A549 (cell line): ENCODE measurements at regions of chr12 and their contacts with region 1.

Region 1: DNA sequence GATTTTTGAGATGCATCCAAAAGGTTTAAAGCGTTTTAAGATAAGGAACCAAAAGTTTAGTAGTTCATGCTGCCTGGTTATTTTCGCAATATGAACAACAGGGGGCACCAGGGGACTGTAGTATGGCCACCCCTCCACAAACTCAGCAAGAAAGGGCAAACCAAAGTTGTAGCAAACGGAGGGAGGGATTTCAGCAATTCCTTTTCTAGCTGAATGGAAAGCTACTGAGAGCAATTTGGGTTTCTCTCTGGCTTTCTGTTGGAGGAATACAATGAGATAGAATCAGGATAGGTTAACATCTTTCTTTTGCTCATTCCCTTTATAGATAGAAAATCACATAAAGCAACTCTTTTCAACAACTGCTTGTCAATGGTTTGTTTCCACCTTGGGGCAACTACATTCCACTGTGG is 62.5 kb downstream of the DRAM1 start:
- DNase-seq: peak; percentile 41 to 71
- ATAC-seq: peak; percentile 67 to 91; a peak in 4 of 6 replicates
- H3K4me3 ChIP-seq: no peak overlapping the region
- H3K27ac ChIP-seq: no peak overlapping the region
- H3K4me1 ChIP-seq: no peaks in the 10 kb centered on the region
- CTCF ChIP-seq: peak; percentile 85
- EP300 ChIP-seq: no peak
- POLR2A ChIP-seq: no peak
- RAD21 ChIP-seq: peak; percentile 93 to 97

Region 2: DNA sequence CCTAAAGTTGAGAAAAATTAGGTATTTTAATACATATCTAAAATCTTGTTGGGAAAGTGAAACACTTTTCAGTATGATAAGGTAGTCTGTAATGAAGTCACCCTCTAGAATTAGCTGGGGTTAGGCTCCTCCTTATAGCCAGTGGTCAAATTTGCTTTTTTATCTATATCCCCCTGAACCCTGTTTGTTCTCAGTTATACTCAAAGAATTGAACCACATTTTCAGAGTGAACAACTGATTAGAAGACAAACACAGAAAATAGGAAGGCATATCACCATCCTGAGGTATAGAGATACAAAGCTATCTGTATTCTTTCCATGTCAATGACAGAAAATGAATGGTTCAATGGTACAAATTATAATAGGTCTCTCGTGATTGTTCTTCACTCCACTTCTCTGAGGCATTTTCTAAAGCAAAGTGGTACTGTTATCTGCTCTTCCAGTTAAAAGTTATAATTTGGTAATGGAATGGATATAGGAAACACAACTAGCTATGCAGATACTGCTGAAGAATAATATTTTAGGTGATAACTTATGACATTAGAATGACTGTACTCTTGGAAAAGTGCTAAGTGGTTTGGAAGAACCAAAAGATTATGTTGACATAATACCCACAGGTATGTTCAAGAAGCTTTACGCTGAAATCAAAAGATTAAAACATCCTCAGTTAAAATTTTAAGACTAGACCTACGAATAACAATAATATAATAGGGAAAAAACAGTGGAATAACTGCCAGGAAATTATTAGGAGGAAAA is 94.3 kb after region 1 on chr12:
- CTCF ChIA-PET with region 1: no interaction called
- POLR2A ChIA-PET with region 1: no interaction called
- DNase-seq: no peak
- ATAC-seq: no peak
- H3K4me3 ChIP-seq: no peak overlapping the region
- H3K27ac ChIP-seq: no peak overlapping the region
- H3K4me1 ChIP-seq: no peaks in the 10 kb centered on the region
- CTCF ChIP-seq: no peak
- EP300 ChIP-seq: no peak
- POLR2A ChIP-seq: no peak
- RAD21 ChIP-seq: no peak

Region 3: GRCh38 chr12:102740141-102740955 is 800.5 kb after region 1 on chr12:
- CTCF ChIA-PET with region 1: interaction called, 24 read pairs
- POLR2A ChIA-PET with region 1: no interaction called
- DNase-seq: peak; percentile 12 to 58
- ATAC-seq: peak; percentile 81 to 87; a peak in 5 of 6 replicates
- H3K4me3 ChIP-seq: no peak overlapping the region
- H3K27ac ChIP-seq: peak overlapping the region in 1 of 2 experiments; percentile 46; a peak in 2 of 6 replicates
- H3K4me1 ChIP-seq: no peaks in the 10 kb centered on the region
- CTCF ChIP-seq: peak; percentile 69
- EP300 ChIP-seq: no peak
- POLR2A ChIP-seq: no peak
- RAD21 ChIP-seq: peak; percentile 81 to 88

Region 4: DNA sequence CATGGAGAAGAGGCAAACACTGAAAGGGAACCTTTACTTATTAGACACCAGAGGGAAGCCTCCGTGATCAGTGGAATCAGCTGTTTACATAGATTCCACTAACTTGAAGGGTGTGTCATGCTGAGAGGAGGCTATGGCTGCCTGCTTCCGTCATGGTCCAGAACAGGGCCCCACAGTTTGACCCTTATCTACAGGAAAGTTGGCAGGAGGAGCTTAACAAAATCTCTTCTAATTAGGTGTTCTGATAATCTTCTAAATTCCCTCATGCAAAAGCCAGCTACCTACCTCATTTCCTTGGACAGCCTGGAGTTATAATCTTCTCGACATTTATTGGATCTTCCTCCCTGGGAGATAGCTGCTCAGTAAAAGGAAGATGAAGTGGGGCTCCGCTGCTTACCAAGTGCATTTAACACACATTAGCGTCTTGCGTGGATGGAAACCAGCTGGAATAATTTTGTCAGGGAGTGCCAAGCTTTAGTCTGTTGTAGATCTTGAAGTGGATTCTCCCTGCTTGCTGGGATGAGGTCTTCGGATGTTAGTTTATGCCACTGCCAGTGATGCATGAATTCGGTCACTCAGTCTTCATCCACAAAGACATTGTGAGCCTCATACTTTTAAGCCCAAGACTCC is 806.2 kb after region 1 on chr12:
- CTCF ChIA-PET with region 1: interaction called, 24 read pairs
- POLR2A ChIA-PET with region 1: no interaction called
- DNase-seq: no peak
- ATAC-seq: no peak
- H3K4me3 ChIP-seq: no peak overlapping the region
- H3K27ac ChIP-seq: no peak overlapping the region
- H3K4me1 ChIP-seq: no peaks in the 10 kb centered on the region
- CTCF ChIP-seq: no peak
- EP300 ChIP-seq: no peak
- POLR2A ChIP-seq: no peak
- RAD21 ChIP-seq: no peak

Region 5: GRCh38 chr12:102769319-102769916 is 829.6 kb after region 1 on chr12:
- CTCF ChIA-PET with region 1: interaction called, 22 read pairs
- POLR2A ChIA-PET with region 1: no interaction called
- DNase-seq: peak; percentile 61 to 71
- ATAC-seq: peak; percentile 94 to 97; a peak in 5 of 6 replicates
- H3K4me3 ChIP-seq: no peak overlapping the region
- H3K27ac ChIP-seq: no peak overlapping the region
- H3K4me1 ChIP-seq: no peaks in the 10 kb centered on the region
- CTCF ChIP-seq: peak; percentile 70
- EP300 ChIP-seq: no peak
- POLR2A ChIP-seq: no peak
- RAD21 ChIP-seq: peak; percentile 80 to 88

Region 6: GRCh38 chr12:102811110-102811737 is 871.4 kb after region 1 on chr12:
- CTCF ChIA-PET with region 1: interaction called, 43 read pairs
- POLR2A ChIA-PET with region 1: no interaction called
- DNase-seq: peak; percentile 38 to 51
- ATAC-seq: peak; percentile 58 to 87; a peak in 4 of 6 replicates
- H3K4me3 ChIP-seq: no peak overlapping the region
- H3K27ac ChIP-seq: no peak overlapping the region
- H3K4me1 ChIP-seq: no peaks in the 10 kb centered on the region
- CTCF ChIP-seq: peak; percentile 75
- EP300 ChIP-seq: no peak
- POLR2A ChIP-seq: no peak
- RAD21 ChIP-seq: peak; percentile 76 to 82

Region 7: GRCh38 chr12:102816816-102817434 is 877.1 kb after region 1 on chr12:
- CTCF ChIA-PET with region 1: interaction called, 43 read pairs
- POLR2A ChIA-PET with region 1: no interaction called
- DNase-seq: peak; percentile 15 to 50
- ATAC-seq: peak; percentile 66 to 84; a peak in 4 of 6 replicates
- H3K4me3 ChIP-seq: no peak overlapping the region
- H3K27ac ChIP-seq: no peak overlapping the region
- H3K4me1 ChIP-seq: no peaks in the 10 kb centered on the region
- CTCF ChIP-seq: peak; percentile 52
- EP300 ChIP-seq: no peak
- POLR2A ChIP-seq: no peak
- RAD21 ChIP-seq: peak; percentile 41 to 59; a peak in 4 of 5 replicates